IMR-90 (cell line): ENCODE measurements at regions of chr13 and their contacts with region 1.

Region 1: GRCh38 chr13:27980280-27980998 is 8.1 kb downstream of the URAD start:
- DNase-seq: no peak
- ATAC-seq: no peak
- H3K4me3 ChIP-seq: no peak overlapping the region
- H3K27ac ChIP-seq: no peak overlapping the region
- H3K4me1 ChIP-seq: no peaks in the 10 kb centered on the region; the same call in 1 of the 2 replicates
- H3K27me3 ChIP-seq: peaks cover 77% of the 10 kb centered on the region
- CTCF ChIP-seq: no peak
- POLR2A ChIP-seq: no peak
- RAD21 ChIP-seq: no peak

Region 2: DNA sequence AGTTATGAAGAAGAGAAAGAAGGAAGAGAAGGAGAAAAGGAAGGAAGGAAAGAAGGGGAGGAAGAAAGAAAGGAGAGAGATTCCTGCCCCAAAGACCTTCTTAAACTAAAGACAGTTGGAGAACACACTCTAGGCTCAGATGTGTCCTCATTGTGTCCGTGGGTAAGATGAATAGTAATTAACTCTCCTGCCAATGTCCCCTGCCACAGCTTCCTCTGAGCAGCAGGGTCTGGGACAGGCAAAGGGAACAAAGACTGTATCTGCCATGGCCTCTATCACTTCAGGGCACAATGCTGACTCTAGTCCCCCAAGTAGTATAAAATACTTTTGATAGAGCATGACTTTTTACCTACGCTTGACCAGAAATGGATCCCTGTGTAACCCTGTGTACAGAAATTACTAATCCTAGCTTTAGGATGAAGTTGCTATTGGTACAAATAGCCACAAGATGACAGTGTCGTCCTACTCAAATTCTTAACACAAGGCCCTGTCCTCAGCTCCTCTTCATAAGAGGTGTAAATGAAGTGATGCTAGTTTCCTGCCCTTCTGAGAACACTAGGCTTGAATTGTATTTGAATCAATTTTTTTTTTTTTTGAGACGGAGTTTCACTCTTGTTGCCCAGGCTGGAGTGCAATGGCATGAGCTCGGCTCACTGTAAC is 1033.6 kb before region 1 on chr13:
- CTCF ChIA-PET with region 1: interaction called, 3 read pairs
- POLR2A ChIA-PET with region 1: no interaction called
- dilution Hi-C with region 1: no loop called
- in situ Hi-C with region 1: no loop called
- intact Hi-C with region 1: loop called (anchors 10 kb)
- DNase-seq: peak; percentile 73
- ATAC-seq: peak; percentile 97
- H3K4me3 ChIP-seq: no peak overlapping the region
- H3K27ac ChIP-seq: no peak overlapping the region
- H3K4me1 ChIP-seq: peaks cover 3% of the 10 kb centered on the region; the same call in 1 of the 2 replicates
- H3K27me3 ChIP-seq: peaks cover 13% of the 10 kb centered on the region
- CTCF ChIP-seq: peak; percentile 93
- POLR2A ChIP-seq: 0 out of 2 replicates have a peak, but pooled peaks have one; percentile 31
- RAD21 ChIP-seq: peak; percentile 95

Region 3: GRCh38 chr13:26971990-26972887 is 1008.2 kb before region 1 on chr13:
- CTCF ChIA-PET with region 1: no interaction called
- POLR2A ChIA-PET with region 1: no interaction called
- dilution Hi-C with region 1: no loop called
- in situ Hi-C with region 1: loop called (anchors 10 kb)
- intact Hi-C with region 1: no loop called
- DNase-seq: peak; percentile 20
- ATAC-seq: no peak; the same call in 1 of the 2 replicates
- H3K4me3 ChIP-seq: no peak overlapping the region
- H3K27ac ChIP-seq: no peak overlapping the region
- H3K4me1 ChIP-seq: peaks cover 5% of the 10 kb centered on the region; the same call in 1 of the 2 replicates
- H3K27me3 ChIP-seq: no peaks in the 10 kb centered on the region; the same call in 1 of the 2 replicates
- CTCF ChIP-seq: peak; percentile 25
- POLR2A ChIP-seq: no peak
- RAD21 ChIP-seq: peak; percentile 40

Region 4: DNA sequence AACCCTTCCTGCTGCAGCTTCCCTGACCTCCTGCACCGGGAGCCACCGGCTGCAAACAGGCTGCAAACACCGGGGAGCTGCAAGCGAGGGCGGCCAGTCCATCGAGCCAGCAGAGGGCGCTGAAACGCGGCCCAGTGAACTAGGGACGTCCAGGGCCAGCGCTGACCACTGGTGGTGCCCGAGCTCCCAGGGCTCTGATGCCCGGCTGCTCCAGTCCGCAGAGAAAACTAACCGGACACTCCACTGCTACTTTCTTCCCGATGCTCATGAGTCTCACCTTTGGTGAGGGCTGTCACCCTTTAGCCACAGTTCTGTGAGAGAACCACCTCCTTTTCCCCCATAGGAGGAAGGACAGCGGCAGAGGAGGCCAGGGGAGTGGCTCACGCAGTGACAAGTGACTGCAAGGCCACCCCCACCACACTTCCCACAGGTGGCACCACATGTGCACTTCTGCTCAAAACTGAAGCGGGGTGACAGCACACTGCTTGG is 447.2 kb before region 1 on chr13:
- CTCF ChIA-PET with region 1: no interaction called
- POLR2A ChIA-PET with region 1: no interaction called
- dilution Hi-C with region 1: no loop called
- in situ Hi-C with region 1: loop called (anchors 25 kb)
- intact Hi-C with region 1: loop called (anchors 5 kb)
- DNase-seq: peak; percentile 59
- ATAC-seq: peak; percentile 100
- H3K4me3 ChIP-seq: no peak overlapping the region
- H3K27ac ChIP-seq: no peak overlapping the region
- H3K4me1 ChIP-seq: no peaks in the 10 kb centered on the region
- H3K27me3 ChIP-seq: peaks cover 4% of the 10 kb centered on the region
- CTCF ChIP-seq: peak; percentile 94
- POLR2A ChIP-seq: 0 out of 2 replicates have a peak, but pooled peaks have one; percentile 32
- RAD21 ChIP-seq: peak; percentile 84

Region 5: DNA sequence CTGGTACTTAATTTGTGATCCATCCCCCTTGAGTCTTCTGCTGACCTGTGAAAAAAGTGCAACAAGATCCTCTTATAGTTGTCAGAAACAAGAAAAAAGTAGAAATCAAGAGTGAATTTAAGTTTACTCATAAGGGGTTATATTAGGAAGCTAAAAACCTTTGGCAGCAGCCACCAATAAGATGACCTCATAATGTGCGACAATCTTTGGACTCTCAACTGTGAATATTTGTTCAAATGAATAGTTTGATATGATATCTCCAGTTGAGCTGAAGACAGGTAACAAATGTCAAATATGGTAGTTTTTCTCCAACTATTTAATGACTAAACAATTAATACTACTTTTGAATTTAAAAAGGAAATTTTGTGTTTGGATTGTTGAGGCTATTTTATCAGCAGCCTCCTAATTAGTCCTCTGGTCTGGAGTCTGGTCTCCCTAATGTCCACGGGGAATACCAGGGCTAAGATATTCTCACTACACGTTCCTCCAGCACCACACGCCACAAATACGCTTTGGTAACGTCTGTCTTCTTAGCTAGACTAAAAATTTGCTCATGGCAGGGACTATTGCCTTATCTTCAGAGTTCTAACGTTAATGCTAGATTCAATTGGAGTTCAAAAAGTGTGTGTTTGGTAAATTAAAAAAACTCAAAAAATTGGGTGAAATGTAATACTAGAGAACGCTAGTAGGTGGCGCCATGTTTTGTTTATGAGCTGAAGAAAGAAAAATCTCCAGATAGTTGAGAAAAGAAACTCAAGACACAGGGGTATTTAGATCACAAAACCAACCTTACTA is 111.6 kb before region 1 on chr13:
- CTCF ChIA-PET with region 1: no interaction called
- POLR2A ChIA-PET with region 1: no interaction called
- dilution Hi-C with region 1: no loop called
- in situ Hi-C with region 1: no loop called
- intact Hi-C with region 1: loop called (anchors 10 kb)
- DNase-seq: peak; percentile 5
- ATAC-seq: no peak
- H3K4me3 ChIP-seq: no peak overlapping the region
- H3K27ac ChIP-seq: no peak overlapping the region
- H3K4me1 ChIP-seq: no peaks in the 10 kb centered on the region
- H3K27me3 ChIP-seq: peaks cover 2% of the 10 kb centered on the region; the same call in 1 of the 2 replicates
- CTCF ChIP-seq: peak; percentile 55
- POLR2A ChIP-seq: no peak
- RAD21 ChIP-seq: peak; percentile 38

Region 6: DNA sequence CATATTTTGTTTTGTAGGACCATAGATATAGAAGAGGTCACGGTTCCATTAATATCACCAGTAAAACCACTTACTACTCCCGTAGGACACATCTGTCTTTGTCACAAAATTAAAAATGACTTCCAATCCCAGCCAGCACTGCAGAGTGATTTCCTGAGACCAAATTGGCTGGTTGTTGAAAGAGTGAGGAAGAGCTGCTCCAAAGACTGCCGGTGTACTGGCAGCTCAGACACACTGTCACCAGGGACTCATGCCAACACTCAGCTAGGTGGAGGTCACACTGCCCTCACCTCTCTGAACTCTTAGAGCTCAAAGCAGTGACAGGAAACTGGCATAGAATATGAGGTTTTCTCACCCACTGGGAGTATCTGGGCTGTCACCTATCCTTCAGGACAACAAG is 462.4 kb after region 1 on chr13:
- CTCF ChIA-PET with region 1: no interaction called
- POLR2A ChIA-PET with region 1: no interaction called
- dilution Hi-C with region 1: no loop called
- in situ Hi-C with region 1: no loop called
- intact Hi-C with region 1: no loop called
- DNase-seq: no peak
- ATAC-seq: no peak
- H3K4me3 ChIP-seq: no peak overlapping the region
- H3K27ac ChIP-seq: no peak overlapping the region
- H3K4me1 ChIP-seq: no peaks in the 10 kb centered on the region
- H3K27me3 ChIP-seq: no peaks in the 10 kb centered on the region
- CTCF ChIP-seq: no peak
- POLR2A ChIP-seq: no peak
- RAD21 ChIP-seq: no peak

Region 7: DNA sequence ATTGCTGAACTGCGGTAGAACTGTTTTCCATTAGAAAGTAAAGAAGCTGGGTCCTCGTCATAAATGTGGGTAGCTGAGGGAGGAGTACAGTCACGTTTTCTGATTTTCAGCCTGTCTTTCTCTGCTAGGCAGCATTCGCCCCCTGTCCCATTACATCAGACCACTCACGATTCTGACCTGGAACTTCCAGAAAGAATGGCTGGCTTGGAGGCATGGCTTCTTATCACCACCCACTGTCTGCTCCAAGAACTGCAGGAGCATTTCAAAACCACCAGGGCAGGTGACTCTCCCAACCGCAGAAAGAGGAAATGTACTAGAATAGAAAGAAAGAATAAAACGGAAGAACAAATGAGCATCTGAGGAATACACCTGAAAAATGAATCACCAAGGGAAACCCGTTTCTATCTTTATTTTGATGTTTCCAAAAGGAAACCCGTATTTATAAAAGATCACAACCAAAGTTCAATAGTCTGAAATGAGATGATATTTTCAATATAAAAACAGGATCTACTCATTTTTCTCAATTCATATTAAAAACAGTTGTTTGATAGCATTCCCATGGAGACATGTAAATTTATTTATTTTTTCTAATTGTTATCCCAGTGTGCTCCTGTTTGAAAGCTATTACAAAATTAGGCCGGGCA is 656.4 kb after region 1 on chr13:
- CTCF ChIA-PET with region 1: no interaction called
- POLR2A ChIA-PET with region 1: no interaction called
- dilution Hi-C with region 1: no loop called
- in situ Hi-C with region 1: no loop called
- intact Hi-C with region 1: loop called (anchors 10 kb)
- DNase-seq: peak; percentile 89
- ATAC-seq: peak; percentile 93
- H3K4me3 ChIP-seq: no peak overlapping the region
- H3K27ac ChIP-seq: no peak overlapping the region
- H3K4me1 ChIP-seq: peaks cover 2% of the 10 kb centered on the region; the same call in 1 of the 2 replicates
- H3K27me3 ChIP-seq: no peaks in the 10 kb centered on the region
- CTCF ChIP-seq: peak; percentile 93
- POLR2A ChIP-seq: peak; percentile 44; the same call in 1 of the 2 replicates
- RAD21 ChIP-seq: peak; percentile 98